Activated naive CD4-positive, alpha-beta T cell treated with anti-CD3 and anti-CD28 coated beads for 36 hours (primary cell): ENCODE measurements at regions of chr6 and their contacts with region 1.

Region 1: GRCh38 chr6:29649701-29650673 is 6.9 kb upstream of the MOG start:
- DNase-seq: peak; percentile 99
- H3K4me3 Mint-ChIP-seq: peak overlapping the region; percentile 92
- H3K27ac Mint-ChIP-seq: peak overlapping the region; percentile 92
- H3K4me1 Mint-ChIP-seq: peaks cover 4% of the 10 kb centered on the region
- H3K27me3 Mint-ChIP-seq: no peaks in the 10 kb centered on the region

Region 2: GRCh38 chr6:29617782-29618557 is 32.0 kb before region 1 on chr6:
- CTCF ChIA-PET with region 1: interaction called, 18 read pairs
- intact Hi-C with region 1: no loop called
- DNase-seq: no peak
- H3K4me3 Mint-ChIP-seq: no peak overlapping the region
- H3K27ac Mint-ChIP-seq: no peak overlapping the region
- H3K4me1 Mint-ChIP-seq: no peaks in the 10 kb centered on the region
- H3K27me3 Mint-ChIP-seq: no peaks in the 10 kb centered on the region

Region 3: GRCh38 chr6:29632789-29633533 is 17.0 kb before region 1 on chr6 and contains the start of gene GABBR1:
- CTCF ChIA-PET with region 1: interaction called, 145 read pairs
- intact Hi-C with region 1: loop called (anchors 1 kb)
- DNase-seq: peak; percentile 77
- H3K4me3 Mint-ChIP-seq: peak within 1 kb of the TSS; percentile 74
- H3K27ac Mint-ChIP-seq: no peak within 1 kb of the TSS
- H3K4me1 Mint-ChIP-seq: peaks cover 38% of the 10 kb centered on the region
- H3K27me3 Mint-ChIP-seq: no peaks in the 10 kb centered on the region
- total RNA-seq, gene GABBR1: 8.0 to 11.2 TPM

Region 4: GRCh38 chr6:29676981-29677601 is 27.1 kb after region 1 on chr6:
- CTCF ChIA-PET with region 1: interaction called, 22 read pairs
- intact Hi-C with region 1: no loop called
- DNase-seq: no peak
- H3K4me3 Mint-ChIP-seq: no peak overlapping the region
- H3K27ac Mint-ChIP-seq: no peak overlapping the region
- H3K4me1 Mint-ChIP-seq: peaks cover 6% of the 10 kb centered on the region
- H3K27me3 Mint-ChIP-seq: no peaks in the 10 kb centered on the region

Region 5: GRCh38 chr6:29705389-29706231 is 55.6 kb after region 1 on chr6:
- CTCF ChIA-PET with region 1: interaction called, 11 read pairs
- intact Hi-C with region 1: no loop called
- DNase-seq: no peak
- H3K4me3 Mint-ChIP-seq: no peak overlapping the region
- H3K27ac Mint-ChIP-seq: no peak overlapping the region
- H3K4me1 Mint-ChIP-seq: peaks cover 48% of the 10 kb centered on the region
- H3K27me3 Mint-ChIP-seq: peaks cover 12% of the 10 kb centered on the region

Region 6: GRCh38 chr6:29752451-29753308 is 102.7 kb after region 1 on chr6:
- CTCF ChIA-PET with region 1: interaction called, 10 read pairs
- intact Hi-C with region 1: loop called (anchors 2 kb)
- DNase-seq: peak; percentile 92
- H3K4me3 Mint-ChIP-seq: peak overlapping the region; percentile 86
- H3K27ac Mint-ChIP-seq: peak overlapping the region; percentile 76
- H3K4me1 Mint-ChIP-seq: peaks cover 20% of the 10 kb centered on the region
- H3K27me3 Mint-ChIP-seq: peaks cover 2% of the 10 kb centered on the region

Region 7: DNA sequence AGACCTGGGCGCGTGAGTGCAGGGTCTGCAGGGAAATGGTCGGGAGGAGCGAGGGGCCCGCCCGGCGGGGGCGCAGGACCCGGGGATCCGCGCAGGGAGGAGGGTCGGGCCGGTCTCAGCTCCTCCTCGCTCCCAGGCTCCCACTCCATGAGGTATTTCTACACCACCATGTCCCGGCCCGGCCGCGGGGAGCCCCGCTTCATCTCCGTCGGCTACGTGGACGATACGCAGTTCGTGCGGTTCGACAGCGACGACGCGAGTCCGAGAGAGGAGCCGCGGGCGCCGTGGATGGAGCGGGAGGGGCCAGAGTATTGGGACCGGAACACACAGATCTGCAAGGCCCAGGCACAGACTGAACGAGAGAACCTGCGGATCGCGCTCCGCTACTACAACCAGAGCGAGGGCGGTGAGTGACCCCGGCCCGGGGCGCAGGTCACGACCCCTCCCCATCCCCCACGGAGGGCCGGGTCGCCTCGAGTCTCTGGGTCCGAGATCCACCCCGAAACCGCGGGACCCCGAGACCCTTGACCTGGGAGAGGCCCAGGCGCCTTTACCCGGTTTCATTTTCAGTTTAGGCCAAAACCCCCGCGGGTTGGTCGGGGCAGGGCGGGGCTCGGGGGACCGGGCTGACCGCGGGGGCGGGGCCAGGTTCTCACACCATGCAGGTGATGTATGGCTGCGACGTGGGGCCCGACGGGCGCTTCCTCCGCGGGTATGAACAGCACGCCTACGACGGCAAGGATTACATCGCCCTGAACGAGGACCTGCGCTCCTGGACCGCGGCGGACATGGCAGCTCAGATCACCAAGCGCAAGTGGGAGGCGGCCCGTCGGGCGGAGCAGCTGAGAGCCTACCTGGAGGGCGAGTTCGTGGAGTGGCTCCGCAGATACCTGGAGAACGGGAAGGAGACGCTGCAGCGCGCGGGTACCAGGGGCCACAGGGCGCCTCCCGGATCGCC is 238.1 kb after region 1 on chr6:
- CTCF ChIA-PET with region 1: no interaction called
- intact Hi-C with region 1: no loop called
- DNase-seq: peak; percentile 87
- H3K4me3 Mint-ChIP-seq: peak overlapping the region; percentile 80
- H3K27ac Mint-ChIP-seq: peak overlapping the region; percentile 91
- H3K4me1 Mint-ChIP-seq: peaks cover 12% of the 10 kb centered on the region
- H3K27me3 Mint-ChIP-seq: no peaks in the 10 kb centered on the region